Aorta (tissue), 5 donors: ENCODE measurements at regions of chr7 and their contacts with region 1.

Region 1: DNA sequence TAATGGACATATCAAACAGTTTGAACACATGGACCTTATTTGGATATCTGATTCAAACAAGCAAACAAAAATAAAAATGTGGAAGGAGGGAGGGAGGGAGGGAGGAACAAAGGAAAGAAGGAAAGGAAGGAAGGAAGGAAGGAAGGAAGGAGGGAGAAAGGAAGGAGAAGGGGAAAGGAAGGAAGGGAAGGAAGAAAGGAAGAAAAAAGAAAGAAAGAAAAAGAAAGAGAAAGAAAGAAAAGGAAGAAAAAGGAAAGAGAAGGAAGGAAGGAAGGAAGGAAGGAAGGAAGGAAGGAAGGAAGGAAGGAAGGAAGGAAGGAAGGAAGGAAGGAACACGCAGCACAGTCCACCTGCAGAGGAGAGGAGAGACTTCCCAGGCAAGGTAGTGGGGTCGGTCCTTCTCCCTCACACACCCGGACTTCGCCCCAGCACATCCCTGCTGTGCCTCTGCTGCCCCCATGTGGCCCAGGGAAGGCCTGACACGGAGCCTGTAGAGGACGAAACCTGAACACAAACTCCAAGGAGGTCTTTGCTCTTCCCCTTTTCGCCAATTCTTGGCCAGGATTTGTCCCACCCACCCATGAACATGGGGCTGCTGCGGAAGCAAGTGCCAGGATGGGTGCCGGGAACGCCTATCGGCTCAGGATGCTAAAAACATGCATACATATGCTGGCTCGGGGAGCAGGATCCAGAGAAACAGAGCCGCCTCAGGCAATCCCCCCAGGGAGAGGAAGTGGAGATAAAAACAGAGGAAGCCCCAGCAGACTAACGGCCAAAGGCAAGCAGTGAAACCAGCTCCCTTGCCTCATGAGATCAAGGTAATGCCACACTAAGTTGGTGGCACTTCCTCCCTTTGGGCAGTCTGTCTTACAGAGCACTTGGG is 52.3 kb upstream of the DGKI start:
- DNase-seq: peak; percentile 89 to 94
- ATAC-seq: peak; percentile 95
- H3K4me3 ChIP-seq: no peak overlapping the region
- H3K27ac ChIP-seq: peak overlapping the region in 1 of 2 donors; percentile 3
- H3K4me1 ChIP-seq: no peaks in the 10 kb centered on the region
- H3K27me3 ChIP-seq: no peaks in the 10 kb centered on the region

Region 2: GRCh38 chr7:137656227-137656849 is 242.7 kb before region 1 on chr7:
- intact Hi-C with region 1: loop called (anchors 1 to 2 kb)
- DNase-seq: peak; percentile 88 to 92
- ATAC-seq: peak; percentile 83
- H3K4me3 ChIP-seq: no peak overlapping the region
- H3K27ac ChIP-seq: peak overlapping the region in 1 of 2 donors; percentile 60
- H3K4me1 ChIP-seq: no peaks in the 10 kb centered on the region
- H3K27me3 ChIP-seq: no peaks in the 10 kb centered on the region

Region 3: GRCh38 chr7:137816696-137817320 is 82.3 kb before region 1 on chr7:
- intact Hi-C with region 1: loop called in 1 of 2 experiments (anchors 5 kb)
- DNase-seq: no peak
- ATAC-seq: no peak
- H3K4me3 ChIP-seq: no peak overlapping the region
- H3K27ac ChIP-seq: no peak overlapping the region
- H3K4me1 ChIP-seq: peaks cover 0 to 5% of the 10 kb centered on the region in 2 donors
- H3K27me3 ChIP-seq: no peaks in the 10 kb centered on the region

Region 4: GRCh38 chr7:138008547-138009349 is 109.7 kb after region 1 on chr7:
- intact Hi-C with region 1: loop called (anchors 1 to 2 kb)
- DNase-seq: no peak
- ATAC-seq: peak; percentile 86
- H3K4me3 ChIP-seq: no peak overlapping the region
- H3K27ac ChIP-seq: no peak overlapping the region
- H3K4me1 ChIP-seq: no peaks in the 10 kb centered on the region
- H3K27me3 ChIP-seq: no peaks in the 10 kb centered on the region